ENCODE measurements at regions of chr1 and their contacts with region 1.

Region 1: DNA sequence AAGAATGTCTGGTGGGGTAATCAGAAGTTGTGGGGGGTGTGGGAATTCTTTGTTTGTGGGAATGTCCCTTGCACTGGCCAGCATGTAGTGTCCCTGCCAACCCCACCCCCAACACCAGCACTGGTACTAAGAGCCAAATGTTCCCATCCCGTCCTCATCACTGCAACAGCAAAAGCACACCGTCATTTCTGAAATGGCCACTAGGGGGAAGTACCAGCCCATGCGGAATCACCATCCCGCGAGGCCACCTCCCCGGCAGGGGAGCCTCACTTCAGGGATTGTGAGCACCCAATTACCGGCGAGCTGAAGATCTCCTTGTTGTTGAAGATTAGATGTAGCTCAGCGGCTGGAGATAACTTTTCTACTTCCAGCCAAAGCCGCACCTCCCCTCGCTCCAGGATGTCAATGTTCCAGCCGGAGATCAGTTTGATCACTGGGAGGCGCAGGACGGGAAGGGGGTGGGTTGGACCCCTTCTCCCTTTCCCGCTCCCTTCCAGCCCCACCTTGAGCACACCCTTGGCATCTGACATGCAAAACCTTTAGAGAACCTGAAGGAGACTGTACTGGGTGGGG is 41.0 kb downstream of the MYOM3 start:
- DNase-seq: peak; percentile 88

Region 2: GRCh38 chr1:23984417-23985186 is 86.3 kb before region 1 on chr1:
- CTCF ChIA-PET with region 1: no interaction called
- POLR2A ChIA-PET with region 1: no interaction called
- DNase-seq: no peak

Region 3: DNA sequence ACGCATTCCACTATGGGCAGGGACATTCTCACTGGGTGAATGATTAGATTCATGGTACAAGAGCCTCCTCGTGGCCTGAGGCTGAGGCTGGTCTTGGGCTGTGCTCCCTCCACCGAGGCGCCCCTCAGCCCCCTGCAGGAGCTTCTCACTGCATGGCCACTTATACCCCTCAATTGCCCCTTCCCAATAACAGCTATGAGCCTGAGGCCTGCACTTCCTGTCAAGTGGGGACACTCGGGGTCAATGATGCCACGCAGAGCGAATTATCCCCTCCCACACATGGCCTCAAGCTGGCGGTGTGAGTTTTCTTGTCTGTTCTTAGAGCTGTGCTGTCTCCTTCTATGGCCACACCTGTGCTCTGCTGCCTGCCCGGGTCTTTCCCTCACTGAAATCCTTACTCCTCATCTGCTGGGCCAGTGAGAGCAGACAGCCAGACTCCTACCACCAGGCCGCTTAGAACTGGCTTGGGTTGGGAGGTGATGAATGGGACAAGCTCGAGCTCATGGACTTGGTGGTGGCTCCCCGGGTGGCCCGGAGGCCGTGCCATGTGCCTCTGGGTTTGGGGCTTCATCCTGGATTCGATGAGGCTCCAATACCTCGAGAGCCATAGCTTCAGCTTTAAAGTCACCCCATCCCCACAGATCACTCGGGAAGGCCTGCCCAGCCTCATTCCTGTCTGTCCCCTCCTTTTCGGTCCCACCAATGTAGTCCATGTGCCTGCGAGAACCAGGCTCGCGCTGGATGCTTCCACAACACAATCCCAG is 10.6 kb before region 1 on chr1:
- CTCF ChIA-PET with region 1: interaction called, 13 read pairs
- POLR2A ChIA-PET with region 1: interaction called, 3 read pairs
- DNase-seq: no peak

Region 4: DNA sequence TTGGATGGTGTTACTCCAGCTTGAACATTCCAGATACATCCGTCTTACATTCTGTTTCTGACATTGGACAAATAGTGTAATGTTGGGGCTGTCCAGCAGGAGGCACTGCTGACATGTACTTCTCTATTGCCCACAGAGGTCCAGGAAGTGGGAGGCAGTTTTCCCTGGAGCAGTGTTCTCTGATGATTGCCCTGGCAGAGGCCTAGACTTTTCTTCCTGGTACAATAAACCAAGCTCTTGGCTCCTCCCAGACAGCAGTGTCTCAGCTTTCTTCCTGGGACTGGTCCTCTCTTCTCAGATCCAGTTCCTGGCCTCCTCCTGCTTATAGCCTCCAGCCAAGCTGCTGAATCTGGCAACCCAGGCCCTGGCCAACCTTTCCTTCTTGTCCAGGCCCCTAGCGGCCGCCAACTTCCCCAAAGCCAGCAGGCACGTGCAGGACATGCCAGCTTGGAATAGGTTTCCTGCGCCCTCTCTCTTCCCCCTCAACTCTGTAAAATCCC is 131.1 kb after region 1 on chr1:
- CTCF ChIA-PET with region 1: interaction called, 13 read pairs
- POLR2A ChIA-PET with region 1: no interaction called
- DNase-seq: peak; percentile 73